ENCODE measurements at regions of chr10 and their contacts with region 1.

Region 1: DNA sequence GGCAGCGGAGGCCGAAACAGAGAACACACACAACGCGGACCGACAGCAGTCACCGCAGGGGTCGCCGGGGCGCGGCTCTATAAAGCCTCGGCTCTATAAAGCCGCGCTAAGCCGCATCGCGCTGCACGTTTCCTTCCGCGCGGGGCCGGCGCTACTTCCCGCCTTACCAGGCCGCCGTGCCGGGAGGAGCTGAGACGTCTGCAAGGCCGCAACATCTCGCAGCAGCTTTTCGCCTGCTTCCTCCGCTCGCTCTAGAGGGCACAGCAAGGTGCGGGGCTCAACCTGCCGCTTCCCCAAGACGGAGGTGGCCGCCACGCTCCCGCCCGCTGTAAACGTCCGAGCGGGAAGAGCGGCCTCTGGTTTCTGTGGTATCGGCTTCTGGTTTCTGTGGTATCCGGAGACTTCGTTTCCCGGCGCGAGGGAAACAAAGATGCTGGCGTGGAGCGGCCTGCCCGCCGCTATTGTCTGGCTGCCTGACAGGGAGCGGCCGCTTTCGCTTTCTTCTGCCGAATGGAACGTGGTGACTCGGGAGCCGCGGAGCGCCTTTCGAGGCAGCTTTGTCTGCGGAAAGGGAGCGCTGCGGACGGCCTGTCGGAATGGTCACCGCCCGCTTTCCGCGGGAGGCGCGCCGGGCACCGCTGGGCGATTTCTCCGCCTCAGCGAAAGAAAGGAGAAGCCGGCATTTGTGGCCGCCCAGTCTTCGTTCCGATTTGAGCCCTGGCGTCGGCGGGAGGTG is 91.8 kb downstream of the SPAG6 start:
- DNase-seq: peak; percentile 79 to 93 (median 89)
- ATAC-seq: peak; percentile 91
- H3K4me3 ChIP-seq: peak overlapping the region; percentile 85
- H3K4me3 Mint-ChIP-seq: peak overlapping the region; percentile 90 to 97 (median 96)
- H3K27ac ChIP-seq: peak overlapping the region; percentile 88
- H3K27ac Mint-ChIP-seq: peak overlapping the region; percentile 96 to 98 (median 98)
- H3K4me1 ChIP-seq: peaks cover 10 to 19% of the 10 kb centered on the region in 2 donors
- H3K4me1 Mint-ChIP-seq: peaks cover 12 to 44% (median 35%) of the 10 kb centered on the region in 7 donors
- H3K27me3 ChIP-seq: no peaks in the 10 kb centered on the region
- H3K27me3 Mint-ChIP-seq: peaks cover 0 to 22% (median 0%) of the 10 kb centered on the region in 5 donors

Region 2: DNA sequence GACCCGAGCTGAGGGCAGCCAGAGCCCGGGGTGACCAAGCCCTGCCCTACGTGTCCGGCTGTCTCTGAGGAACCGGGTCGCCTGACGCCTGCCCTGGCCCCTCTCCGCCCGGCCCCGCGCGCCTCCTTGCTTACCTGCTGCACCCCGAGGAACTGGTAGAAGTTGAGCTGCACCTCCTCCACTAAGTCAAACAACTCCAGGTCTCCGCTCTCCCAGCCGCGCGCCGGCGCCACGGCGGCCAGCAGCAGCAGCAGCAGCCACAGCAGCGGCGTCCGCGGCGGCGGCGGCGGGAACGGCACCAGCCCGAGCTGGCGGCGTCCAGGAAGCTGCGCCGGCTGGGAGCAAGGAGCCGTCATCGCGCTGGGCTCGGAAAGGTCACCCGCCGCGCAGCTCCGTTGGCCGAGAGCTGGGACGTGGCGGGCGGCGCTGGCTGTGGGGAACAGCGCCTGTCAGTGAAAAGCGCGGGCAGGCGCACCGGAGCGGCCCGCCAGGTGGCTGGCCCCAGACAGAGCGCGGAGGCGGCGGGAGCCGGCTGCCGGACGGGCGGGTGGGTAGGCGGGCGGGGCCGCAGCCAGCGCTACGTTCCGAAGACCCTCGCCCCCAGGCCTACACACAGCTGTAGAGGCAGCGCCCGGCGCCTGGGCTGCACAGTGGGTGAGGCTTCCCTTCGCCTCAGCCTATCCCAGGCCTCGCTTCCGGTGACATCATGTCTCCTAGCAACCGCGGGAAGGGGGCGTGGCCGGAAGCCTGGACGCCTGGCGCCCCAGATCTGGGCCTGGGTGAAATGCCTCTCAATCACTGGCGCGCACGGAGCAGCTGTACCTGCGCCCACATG is 433.8 kb before region 1 on chr10 and contains the start of gene DNAJC1:
- CTCF ChIA-PET with region 1: no interaction called
- POLR2A ChIA-PET with region 1: interaction called, 22 read pairs
- intact Hi-C with region 1: loop called (anchors 1 kb)
- DNase-seq: peak; percentile 94 to 99 (median 97)
- ATAC-seq: peak; percentile 97
- H3K4me3 ChIP-seq: peak within 1 kb of the TSS; percentile 87
- H3K4me3 Mint-ChIP-seq: peak within 1 kb of the TSS; percentile 81 to 99 (median 94)
- H3K27ac ChIP-seq: peak within 1 kb of the TSS; percentile 82
- H3K27ac Mint-ChIP-seq: peak within 1 kb of the TSS; percentile 78 to 94 (median 92)
- H3K4me1 ChIP-seq: peaks cover 18 to 19% of the 10 kb centered on the region in 2 donors
- H3K4me1 Mint-ChIP-seq: peaks cover 7 to 42% (median 29%) of the 10 kb centered on the region in 7 donors
- H3K27me3 ChIP-seq: no peaks in the 10 kb centered on the region
- H3K27me3 Mint-ChIP-seq: peaks cover 0 to 15% (median 4%) of the 10 kb centered on the region in 5 donors
- total RNA-seq, gene DNAJC1: 11.0 to 23.9 (median 12.1) TPM

Region 3: GRCh38 chr10:22316285-22317120 is 120.5 kb before region 1 on chr10 and contains the start of gene COMMD3:
- CTCF ChIA-PET with region 1: interaction called, 3 read pairs
- POLR2A ChIA-PET with region 1: interaction called, 32 read pairs
- intact Hi-C with region 1: loop called (anchors 1 to 2 kb)
- DNase-seq: peak; percentile 71 to 85 (median 80)
- ATAC-seq: peak; percentile 84
- H3K4me3 ChIP-seq: peak within 1 kb of the TSS; percentile 73
- H3K4me3 Mint-ChIP-seq: peak within 1 kb of the TSS; percentile 85 to 99 (median 96)
- H3K27ac ChIP-seq: peak within 1 kb of the TSS; percentile 80
- H3K27ac Mint-ChIP-seq: peak within 1 kb of the TSS; percentile 87 to 99 (median 96)
- H3K4me1 ChIP-seq: peaks cover 16 to 25% of the 10 kb centered on the region in 2 donors
- H3K4me1 Mint-ChIP-seq: peaks cover 11 to 53% (median 46%) of the 10 kb centered on the region in 7 donors
- H3K27me3 ChIP-seq: peaks cover 0 to 13% of the 10 kb centered on the region in 2 donors
- H3K27me3 Mint-ChIP-seq: peaks cover 0 to 18% (median 14%) of the 10 kb centered on the region in 5 donors
- total RNA-seq, gene COMMD3: 33.9 to 83.7 (median 51.2) TPM

Region 4: DNA sequence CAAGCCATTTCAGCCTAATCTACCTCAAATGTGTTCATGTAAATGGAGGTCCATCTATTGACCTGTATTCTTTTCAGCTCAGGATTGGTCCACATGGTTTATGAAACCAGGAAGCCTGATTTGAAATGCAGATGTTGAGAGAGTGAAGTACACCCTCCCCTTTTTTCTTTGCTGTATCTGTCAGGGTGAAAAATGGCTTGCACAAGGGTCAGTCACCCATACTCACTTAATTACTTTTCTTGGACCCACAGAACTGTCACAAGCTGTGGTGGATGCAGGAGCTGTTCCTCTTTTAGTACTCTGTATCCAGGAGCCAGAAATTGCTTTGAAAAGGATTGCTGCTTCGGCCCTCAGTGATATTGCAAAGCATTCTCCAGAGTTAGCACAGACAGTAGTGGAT is 50.5 kb before region 1 on chr10:
- CTCF ChIA-PET with region 1: no interaction called
- POLR2A ChIA-PET with region 1: no interaction called
- intact Hi-C with region 1: no loop called
- DNase-seq: no peak
- ATAC-seq: no peak
- H3K4me3 ChIP-seq: no peak overlapping the region
- H3K4me3 Mint-ChIP-seq: no peak overlapping the region
- H3K27ac ChIP-seq: no peak overlapping the region
- H3K27ac Mint-ChIP-seq: no peak overlapping the region
- H3K4me1 ChIP-seq: no peaks in the 10 kb centered on the region
- H3K4me1 Mint-ChIP-seq: peaks cover 0 to 4% (median 0%) of the 10 kb centered on the region in 7 donors
- H3K27me3 ChIP-seq: no peaks in the 10 kb centered on the region
- H3K27me3 Mint-ChIP-seq: peaks cover 0 to 11% (median 7%) of the 10 kb centered on the region in 5 donors

Region 5: DNA sequence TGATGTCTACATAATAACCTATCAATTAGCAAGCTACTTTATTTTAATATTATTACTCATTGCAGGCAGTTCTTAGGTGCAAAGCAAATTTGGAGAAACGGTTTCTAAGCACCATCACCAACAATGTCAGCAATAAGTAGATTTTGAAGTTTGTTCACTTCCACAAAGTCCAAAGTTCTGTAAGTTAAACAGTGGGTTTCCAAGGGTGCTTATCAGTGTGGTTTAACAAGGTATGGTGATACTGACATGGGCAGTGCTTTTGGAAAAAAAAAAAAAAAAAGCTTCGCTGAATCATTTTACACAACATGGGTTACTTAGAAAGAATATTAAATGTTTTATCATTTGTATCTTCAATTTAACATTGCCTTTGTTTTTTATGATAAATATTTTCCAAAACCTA is 10.0 kb after region 1 on chr10:
- CTCF ChIA-PET with region 1: no interaction called
- POLR2A ChIA-PET with region 1: interaction called, 10 read pairs
- intact Hi-C with region 1: no loop called
- DNase-seq: no peak
- ATAC-seq: no peak
- H3K4me3 ChIP-seq: no peak overlapping the region
- H3K4me3 Mint-ChIP-seq: no peak overlapping the region
- H3K27ac ChIP-seq: no peak overlapping the region
- H3K27ac Mint-ChIP-seq: no peak overlapping the region
- H3K4me1 ChIP-seq: no peaks in the 10 kb centered on the region
- H3K4me1 Mint-ChIP-seq: no peaks in the 10 kb centered on the region
- H3K27me3 ChIP-seq: no peaks in the 10 kb centered on the region
- H3K27me3 Mint-ChIP-seq: peaks cover 7 to 41% (median 13%) of the 10 kb centered on the region in 5 donors

Region 6: GRCh38 chr10:22615819-22616499 is 178.9 kb after region 1 on chr10:
- CTCF ChIA-PET with region 1: no interaction called
- POLR2A ChIA-PET with region 1: no interaction called
- intact Hi-C with region 1: loop called in 1 of 2 experiments (anchors 1 kb)
- DNase-seq: no peak
- ATAC-seq: peak; percentile 45
- H3K4me3 ChIP-seq: peak overlapping the region; percentile 38
- H3K4me3 Mint-ChIP-seq: peak overlapping the region; percentile 5 to 72 (median 26)
- H3K27ac ChIP-seq: peak overlapping the region; percentile 16
- H3K27ac Mint-ChIP-seq: peak overlapping the region; percentile 26 to 94 (median 75)
- H3K4me1 ChIP-seq: peaks cover 77 to 98% of the 10 kb centered on the region in 2 donors
- H3K4me1 Mint-ChIP-seq: peaks cover 75 to 100% (median 96%) of the 10 kb centered on the region in 7 donors
- H3K27me3 ChIP-seq: no peaks in the 10 kb centered on the region
- H3K27me3 Mint-ChIP-seq: no peaks in the 10 kb centered on the region

Region 7: DNA sequence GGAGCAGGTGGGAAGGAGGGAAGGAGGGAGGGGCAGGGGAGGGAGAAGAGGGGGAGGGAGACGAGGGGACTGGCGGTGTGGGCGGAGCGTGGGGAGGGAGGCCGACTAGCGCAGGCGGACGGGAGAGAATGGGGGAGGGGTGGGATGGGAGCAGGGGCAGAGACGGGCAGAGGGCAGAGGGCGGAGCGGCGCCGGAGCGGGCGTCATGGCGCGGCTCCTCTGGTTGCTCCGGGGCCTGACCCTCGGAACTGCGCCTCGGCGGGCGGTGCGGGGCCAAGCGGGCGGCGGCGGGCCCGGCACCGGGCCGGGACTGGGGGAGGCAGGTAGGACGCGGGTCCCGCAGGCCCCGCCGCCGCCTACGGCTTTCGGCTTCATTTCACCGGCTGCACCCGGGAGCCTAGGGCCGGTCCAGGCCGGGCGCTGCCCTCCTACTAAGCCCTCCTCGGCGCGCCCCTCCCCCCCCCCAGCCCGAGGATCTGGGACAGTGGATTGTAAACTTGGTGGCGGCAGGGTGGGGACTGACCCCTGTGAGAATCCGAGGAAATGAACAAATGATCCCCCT is 658.4 kb after region 1 on chr10 and contains the start of gene MSRB2:
- CTCF ChIA-PET with region 1: no interaction called
- POLR2A ChIA-PET with region 1: no interaction called
- intact Hi-C with region 1: loop called (anchors 1 to 5 kb)
- DNase-seq: peak; percentile 34 to 70 (median 58)
- ATAC-seq: peak; percentile 83
- H3K4me3 ChIP-seq: peak within 1 kb of the TSS; percentile 66
- H3K4me3 Mint-ChIP-seq: peak within 1 kb of the TSS; percentile 85 to 100 (median 94)
- H3K27ac ChIP-seq: peak within 1 kb of the TSS; percentile 74
- H3K27ac Mint-ChIP-seq: peak within 1 kb of the TSS; percentile 84 to 97 (median 94)
- H3K4me1 ChIP-seq: peaks cover 13 to 20% of the 10 kb centered on the region in 2 donors
- H3K4me1 Mint-ChIP-seq: peaks cover 30 to 45% (median 43%) of the 10 kb centered on the region in 7 donors
- H3K27me3 ChIP-seq: no peaks in the 10 kb centered on the region
- H3K27me3 Mint-ChIP-seq: peaks cover 0 to 22% (median 0%) of the 10 kb centered on the region in 5 donors
- total RNA-seq, gene MSRB2: 4.7 to 11.9 (median 9.0) TPM

Measured in naive thymus-derived CD4-positive, alpha-beta T cell (primary cell).